GM23248 (cell line): ENCODE measurements at regions of chr16 and their contacts with region 1.

Region 1: DNA sequence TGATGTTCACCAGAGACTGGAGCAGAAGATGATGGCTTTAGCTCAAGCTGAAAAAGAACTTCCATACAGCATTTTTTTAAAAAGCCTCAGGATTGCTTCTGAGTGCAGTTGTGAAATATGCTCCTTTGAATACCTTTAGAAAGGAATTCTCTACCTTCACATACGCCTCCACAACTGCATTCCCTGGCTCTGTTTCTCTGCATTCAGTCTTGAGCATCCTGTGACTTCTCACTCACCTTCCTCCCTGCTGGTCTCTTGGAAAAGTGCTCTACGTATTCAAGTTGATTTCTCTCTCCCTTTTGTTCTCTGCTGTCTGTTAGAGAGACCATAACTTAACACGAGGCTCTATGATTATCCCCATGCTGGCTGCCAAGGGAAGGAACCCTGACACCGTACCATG is 34.5 kb downstream of the HS3ST2 start:
- DNase-seq: no peak
- H3K4me3 ChIP-seq: no peak overlapping the region
- H3K27ac ChIP-seq: no peak overlapping the region
- H3K4me1 ChIP-seq: no peaks in the 10 kb centered on the region
- H3K27me3 ChIP-seq: no peaks in the 10 kb centered on the region

Region 2: DNA sequence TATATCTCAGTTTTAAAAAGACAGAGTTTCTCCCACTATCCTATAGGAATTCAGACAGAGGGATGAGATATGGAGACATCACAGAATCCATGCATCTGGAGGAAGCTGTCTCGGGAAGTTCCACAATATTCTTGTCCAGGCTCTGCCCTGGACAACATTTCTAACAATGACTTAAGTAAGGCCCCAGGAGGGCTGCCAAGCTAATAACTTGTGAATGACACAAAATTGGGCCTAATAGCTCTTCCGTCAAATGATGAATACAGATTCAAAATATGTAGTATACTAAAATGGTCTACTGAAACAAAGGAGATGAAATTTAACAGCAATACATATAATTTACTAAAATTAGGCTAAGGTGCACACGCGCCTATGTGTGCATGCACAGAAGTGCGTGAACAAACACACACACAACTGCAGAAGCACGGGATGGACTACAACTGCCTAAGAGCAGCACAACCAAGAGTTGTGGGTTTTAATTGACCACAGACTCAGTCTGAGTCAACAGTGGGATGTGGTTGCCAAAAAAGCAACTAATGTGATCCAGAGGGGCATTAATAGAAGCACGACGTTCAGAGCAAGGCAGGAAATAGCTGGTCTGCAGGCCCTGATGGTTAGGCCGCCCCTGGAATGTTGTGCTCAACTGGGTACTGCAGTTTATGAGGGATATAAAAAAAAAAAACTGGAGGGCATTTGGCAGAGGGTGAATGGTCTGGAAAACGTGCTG is 60.8 kb before region 1 on chr16:
- in situ Hi-C with region 1: loop called (anchors 10 kb)
- DNase-seq: peak; percentile 91
- H3K4me3 ChIP-seq: no peak overlapping the region
- H3K27ac ChIP-seq: peak overlapping the region; percentile 68
- H3K4me1 ChIP-seq: peaks cover 32% of the 10 kb centered on the region
- H3K27me3 ChIP-seq: 0 out of 2 replicates have a peak, but pooled peaks cover 2% of the 10 kb centered on the region